Aorta (tissue), 5 donors: ENCODE measurements at regions of chr16 and their contacts with region 1.

Region 1: DNA sequence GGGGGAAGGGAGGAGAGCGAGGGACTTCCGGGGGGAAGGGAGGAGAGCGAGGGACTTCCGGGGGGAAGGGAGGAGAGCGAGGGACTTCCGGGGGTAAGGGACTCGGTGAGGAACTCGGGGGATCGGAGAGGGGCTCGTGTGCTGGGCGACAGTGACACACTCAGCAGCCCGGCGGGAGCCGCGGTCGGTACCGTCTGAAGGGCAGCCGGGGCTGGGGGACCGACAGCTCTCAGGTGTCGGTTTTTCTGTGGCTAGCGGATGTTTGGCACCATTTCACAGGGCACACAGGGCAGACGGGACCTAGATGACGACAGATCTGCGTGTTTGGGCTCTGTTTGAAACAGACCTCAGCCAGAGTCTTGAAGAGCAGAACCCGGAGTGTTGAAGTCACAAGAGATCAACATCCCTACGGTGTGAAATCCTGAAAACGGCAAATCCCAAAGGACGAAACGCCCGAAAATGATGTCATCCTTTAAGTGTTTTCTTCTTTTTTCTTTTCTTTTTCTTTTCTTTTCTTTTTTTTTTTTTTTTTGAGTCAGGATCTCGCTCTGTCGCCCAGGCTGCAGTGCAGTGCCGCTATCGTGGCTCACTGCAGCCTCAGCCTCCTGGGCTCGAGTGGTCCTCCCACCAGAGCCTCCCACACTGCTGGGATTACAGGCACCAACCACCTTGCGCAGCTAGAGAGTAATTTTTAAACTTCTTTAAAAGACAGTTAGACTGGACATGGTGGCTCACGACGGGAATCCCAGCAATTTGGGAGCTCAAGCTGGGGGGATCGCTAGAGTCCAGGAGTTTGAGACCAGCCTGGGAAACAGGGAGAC is 23.9 kb downstream of the ZNF778 start:
- DNase-seq: peak; percentile 81 to 88
- ATAC-seq: peak; percentile 88
- H3K4me3 ChIP-seq: peak overlapping the region; percentile 49 to 83
- H3K27ac ChIP-seq: peak overlapping the region; percentile 38 to 97
- H3K4me1 ChIP-seq: no peaks in the 10 kb centered on the region
- H3K27me3 ChIP-seq: no peaks in the 10 kb centered on the region

Region 2: GRCh38 chr16:89308390-89309333 is 67.3 kb after region 1 on chr16:
- intact Hi-C with region 1: loop called in 1 of 2 experiments (anchors 10 kb)
- DNase-seq: no peak
- ATAC-seq: no peak
- H3K4me3 ChIP-seq: no peak overlapping the region
- H3K27ac ChIP-seq: no peak overlapping the region
- H3K4me1 ChIP-seq: no peaks in the 10 kb centered on the region
- H3K27me3 ChIP-seq: no peaks in the 10 kb centered on the region

Region 3: GRCh38 chr16:89319883-89320781 is 78.7 kb after region 1 on chr16:
- intact Hi-C with region 1: loop called in 1 of 2 experiments (anchors 10 kb)
- DNase-seq: peak; percentile 82 to 90
- ATAC-seq: peak; percentile 84
- H3K4me3 ChIP-seq: peak overlapping the region in 1 of 2 donors; percentile 5
- H3K27ac ChIP-seq: peak overlapping the region in 1 of 2 donors; percentile 53
- H3K4me1 ChIP-seq: peaks cover 2 to 3% of the 10 kb centered on the region in 2 donors
- H3K27me3 ChIP-seq: no peaks in the 10 kb centered on the region

Region 4: GRCh38 chr16:89560378-89561141 is 319.2 kb after region 1 on chr16 and contains the start of gene RPL13:
- intact Hi-C with region 1: loop called in 1 of 2 experiments (anchors 10 kb)
- DNase-seq: peak; percentile 97 to 98
- ATAC-seq: peak; percentile 98
- H3K4me3 ChIP-seq: peak within 1 kb of the TSS; percentile 78 to 80
- H3K27ac ChIP-seq: peak within 1 kb of the TSS; percentile 83 to 88
- H3K4me1 ChIP-seq: no peaks in the 10 kb centered on the region
- H3K27me3 ChIP-seq: peaks cover 0 to under 1% of the 10 kb centered on the region in 2 donors
- total RNA-seq, gene RPL13: 1,505 to 1,678 TPM